Activated naive CD8-positive, alpha-beta T cell treated with anti-CD3 and anti-CD28 coated beads, Interleukin-2, amount 10 ng/mL, durations not matched to agents 7 days and 5 days (primary cell): ENCODE measurements at regions of chr1 and their contacts with region 1.

Region 1: DNA sequence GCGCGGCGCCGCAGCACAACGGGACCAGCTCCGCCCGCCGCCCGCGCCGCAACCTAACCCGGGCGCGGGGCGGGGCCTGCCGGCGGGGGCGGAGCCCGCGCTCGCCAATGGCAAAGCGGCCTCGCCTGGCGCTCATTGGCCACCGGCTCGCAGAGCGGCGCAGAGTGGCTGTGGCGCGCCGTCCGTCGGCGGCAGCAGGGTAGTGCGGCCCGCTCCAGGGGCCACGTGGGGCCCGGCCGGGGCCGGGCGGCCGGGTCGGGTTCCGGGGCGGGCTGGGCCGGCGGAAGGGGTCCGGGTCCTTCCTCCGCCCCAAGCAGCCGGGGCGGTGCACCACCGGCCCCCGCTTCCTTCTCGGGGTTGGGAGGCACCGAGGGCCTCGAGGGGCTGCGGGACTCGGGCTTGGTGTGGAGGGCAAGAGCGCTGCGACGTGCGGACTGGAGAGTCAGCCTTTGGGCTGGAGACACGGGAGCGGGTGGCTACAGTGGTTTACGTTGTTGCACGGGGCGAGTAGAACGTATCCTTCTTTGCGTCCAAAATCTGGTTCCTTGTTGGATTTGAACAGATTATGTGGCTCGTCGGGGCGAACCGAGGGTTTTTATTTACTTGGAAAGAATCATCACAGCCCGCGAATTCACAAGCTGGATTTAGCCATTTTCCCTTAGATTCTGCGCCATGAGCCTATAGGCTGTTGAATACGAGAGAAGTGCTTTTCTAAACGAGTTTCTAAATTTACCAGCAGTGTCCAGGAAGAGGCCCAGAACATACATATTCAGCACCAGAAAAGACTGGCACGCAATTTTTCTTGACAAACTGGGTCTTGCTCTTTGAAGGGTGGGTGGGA is at the start of gene SRM:
- DNase-seq: peak; percentile 97
- ATAC-seq: peak; percentile 95
- H3K4me3 Mint-ChIP-seq: peak within 1 kb of the TSS; percentile 91
- H3K27ac Mint-ChIP-seq: peak within 1 kb of the TSS; percentile 94
- H3K4me1 Mint-ChIP-seq: peaks cover 33% of the 10 kb centered on the region
- H3K27me3 Mint-ChIP-seq: no peaks in the 10 kb centered on the region
- total RNA-seq, gene SRM: 72.3 to 85.0 TPM

Region 2: GRCh38 chr1:11037740-11038182 is 22.4 kb before region 1 on chr1:
- POLR2A ChIA-PET with region 1: interaction called, 11 read pairs
- DNase-seq: peak; percentile 86
- ATAC-seq: peak; percentile 97
- H3K4me3 Mint-ChIP-seq: peak overlapping the region; percentile 31
- H3K27ac Mint-ChIP-seq: no peak overlapping the region
- H3K4me1 Mint-ChIP-seq: peaks cover 8% of the 10 kb centered on the region
- H3K27me3 Mint-ChIP-seq: no peaks in the 10 kb centered on the region

Region 3: DNA sequence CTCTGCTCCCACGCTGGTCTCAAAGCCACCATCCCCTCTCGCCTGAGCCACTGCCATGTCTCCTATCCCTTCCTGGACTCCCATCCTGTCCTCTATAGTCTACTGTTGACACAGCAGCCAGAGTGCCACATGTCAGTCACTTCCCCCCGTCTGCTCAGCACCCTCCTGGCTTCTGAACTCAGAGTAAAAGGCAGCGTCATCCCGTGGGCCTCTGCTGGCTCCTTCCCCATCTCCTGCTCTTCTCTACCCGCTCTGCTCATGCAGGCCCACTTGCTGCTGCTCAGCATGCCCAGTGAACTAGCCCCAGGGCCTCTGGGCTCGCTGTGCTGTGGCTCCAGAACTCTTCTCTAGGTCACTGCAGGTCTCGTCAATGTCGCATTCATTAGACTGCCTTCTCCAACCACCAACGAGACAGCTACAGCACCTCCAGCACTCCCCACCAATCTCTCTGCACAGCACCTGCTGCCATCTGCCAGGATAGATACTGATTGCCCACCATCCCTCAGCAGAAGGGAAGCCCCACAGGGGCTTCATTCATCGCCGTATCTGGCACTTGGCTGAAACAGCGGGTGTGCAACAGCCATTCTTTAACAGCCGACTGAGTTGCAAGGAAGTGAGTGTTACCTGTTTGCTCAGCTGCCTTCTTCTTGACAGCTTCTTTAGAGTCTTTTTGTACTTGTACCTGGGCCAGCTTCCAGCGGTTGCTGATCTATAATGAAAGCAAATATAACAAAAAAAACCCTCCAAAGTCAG is 11.4 kb after region 1 on chr1:
- POLR2A ChIA-PET with region 1: interaction called, 28 read pairs
- DNase-seq: no peak
- ATAC-seq: no peak
- H3K4me3 Mint-ChIP-seq: no peak overlapping the region
- H3K27ac Mint-ChIP-seq: peak overlapping the region; percentile 62
- H3K4me1 Mint-ChIP-seq: peaks cover 19% of the 10 kb centered on the region
- H3K27me3 Mint-ChIP-seq: no peaks in the 10 kb centered on the region

Region 4: GRCh38 chr1:11099310-11100149 is 39.3 kb after region 1 on chr1 and contains the start of gene EXOSC10:
- POLR2A ChIA-PET with region 1: interaction called, 26 read pairs
- DNase-seq: peak; percentile 98
- ATAC-seq: peak; percentile 97
- H3K4me3 Mint-ChIP-seq: peak within 1 kb of the TSS; percentile 96
- H3K27ac Mint-ChIP-seq: peak within 1 kb of the TSS; percentile 96
- H3K4me1 Mint-ChIP-seq: peaks cover 12% of the 10 kb centered on the region
- H3K27me3 Mint-ChIP-seq: no peaks in the 10 kb centered on the region
- total RNA-seq, gene EXOSC10: 89.1 to 92.8 TPM

Region 5: DNA sequence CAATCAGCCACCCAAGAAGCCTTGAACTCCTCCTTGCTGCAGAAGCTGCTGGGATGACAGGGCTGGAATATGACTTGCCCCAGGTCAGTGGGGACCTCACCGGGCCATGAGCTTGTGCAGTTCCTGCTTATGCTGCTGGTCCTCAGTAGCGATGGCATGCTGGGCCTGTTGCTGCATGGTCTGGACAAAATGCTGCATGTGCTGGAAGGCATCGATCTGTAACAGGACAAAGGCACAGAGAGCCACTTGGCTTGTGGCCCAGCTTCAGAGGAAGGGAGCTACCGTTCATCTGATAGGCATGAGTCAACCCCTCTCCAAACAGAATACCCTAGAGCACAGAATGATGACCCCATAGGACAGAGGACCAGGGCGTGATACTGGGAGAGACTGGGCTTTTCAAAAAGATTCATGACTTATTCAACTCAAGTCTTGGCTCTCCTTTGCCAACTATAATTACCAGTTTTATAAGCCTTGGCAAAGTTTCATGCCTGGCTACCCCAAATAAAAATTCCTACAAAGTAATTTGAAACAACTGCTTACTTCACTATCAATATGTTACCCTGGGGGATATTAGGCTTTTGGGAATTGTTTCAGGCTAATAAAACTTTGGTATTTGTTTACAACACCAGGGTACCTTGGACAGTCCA is 74.2 kb after region 1 on chr1:
- POLR2A ChIA-PET with region 1: no interaction called
- DNase-seq: no peak
- ATAC-seq: no peak
- H3K4me3 Mint-ChIP-seq: no peak overlapping the region
- H3K27ac Mint-ChIP-seq: no peak overlapping the region
- H3K4me1 Mint-ChIP-seq: no peaks in the 10 kb centered on the region
- H3K27me3 Mint-ChIP-seq: no peaks in the 10 kb centered on the region